ENCODE measurements at regions of chr6 and their contacts with region 1.

Region 1: DNA sequence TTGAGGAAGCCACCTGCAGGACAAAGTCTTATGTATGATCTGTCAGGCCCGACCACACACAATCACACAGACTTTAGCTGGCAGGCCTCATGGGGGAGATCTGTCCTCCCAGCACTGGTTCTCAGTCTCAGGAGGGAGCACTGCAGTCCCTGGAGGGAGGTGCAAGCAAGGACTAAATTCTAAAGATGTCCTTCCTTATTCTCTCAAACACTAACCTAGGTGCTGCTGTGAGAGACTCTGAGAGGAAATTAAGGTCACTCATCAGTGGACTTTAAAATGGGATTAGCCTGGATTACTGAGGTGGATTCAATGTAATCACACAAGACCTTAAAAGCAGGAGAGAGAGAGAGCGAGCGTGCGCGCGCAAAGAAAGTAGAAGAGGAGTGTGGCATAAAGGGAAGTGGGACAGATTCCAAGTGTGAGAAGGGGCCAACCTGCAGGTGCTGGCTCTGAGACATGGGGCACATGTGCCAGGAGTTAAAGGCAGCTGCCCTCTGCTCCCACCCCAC is 14.3 kb downstream of the GLO1 start:
- DNase-seq: no peak
- H3K4me3 ChIP-seq: no peak overlapping the region
- H3K27ac ChIP-seq: no peak overlapping the region
- H3K4me1 ChIP-seq: peaks cover 9% of the 10 kb centered on the region
- H3K27me3 ChIP-seq: no peaks in the 10 kb centered on the region
- CTCF ChIP-seq: no peak
- EP300 ChIP-seq: no peak
- POLR2A ChIP-seq: no peak

Region 2: GRCh38 chr6:37347670-37348111 is 1340.9 kb before region 1 on chr6:
- intact Hi-C with region 1: loop called in 1 of 4 experiments (anchors 5 kb)
- DNase-seq: no peak
- H3K4me3 ChIP-seq: no peak overlapping the region
- H3K27ac ChIP-seq: no peak overlapping the region
- H3K4me1 ChIP-seq: no peaks in the 10 kb centered on the region
- H3K27me3 ChIP-seq: no peaks in the 10 kb centered on the region
- CTCF ChIP-seq: no peak
- EP300 ChIP-seq: no peak
- POLR2A ChIP-seq: no peak

Region 3: DNA sequence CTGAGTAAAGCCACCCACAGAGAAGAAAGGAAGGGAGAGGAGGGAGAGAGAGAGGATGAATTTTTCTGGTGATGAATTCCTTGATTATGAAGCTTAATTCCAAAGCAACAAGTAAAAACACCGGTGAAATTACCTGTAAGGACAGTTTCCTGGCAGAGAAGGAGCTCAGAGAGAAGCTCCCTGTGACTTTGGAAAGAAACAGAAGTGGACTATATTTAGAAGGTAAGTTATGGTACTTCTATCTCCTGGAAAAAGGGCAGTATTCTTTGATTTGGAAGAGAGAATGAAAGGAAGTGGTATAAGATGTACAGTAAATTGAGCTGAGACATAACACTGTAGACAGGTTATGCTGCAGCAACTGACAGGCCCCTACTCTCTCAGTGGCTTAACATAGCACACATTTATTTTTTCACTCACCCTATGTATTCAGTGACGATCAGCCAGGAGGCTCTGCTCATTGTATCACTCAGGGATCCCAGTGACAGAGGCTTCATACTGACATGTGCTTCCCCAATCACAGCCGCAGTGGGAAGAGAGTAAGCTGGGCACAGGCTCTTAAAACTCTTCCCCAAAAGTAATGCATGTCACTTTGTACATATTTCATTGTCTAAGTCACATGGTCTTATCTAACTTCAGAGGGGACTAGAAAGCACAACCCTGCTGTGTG is 398.4 kb before region 1 on chr6:
- intact Hi-C with region 1: no loop called
- DNase-seq: no peak
- H3K4me3 ChIP-seq: no peak overlapping the region
- H3K27ac ChIP-seq: no peak overlapping the region
- H3K4me1 ChIP-seq: peaks cover 1% of the 10 kb centered on the region
- H3K27me3 ChIP-seq: no peaks in the 10 kb centered on the region
- CTCF ChIP-seq: no peak
- EP300 ChIP-seq: no peak
- POLR2A ChIP-seq: no peak